PC-9 (cell line): ENCODE measurements at regions of chr5 and their contacts with region 1.

Region 1: DNA sequence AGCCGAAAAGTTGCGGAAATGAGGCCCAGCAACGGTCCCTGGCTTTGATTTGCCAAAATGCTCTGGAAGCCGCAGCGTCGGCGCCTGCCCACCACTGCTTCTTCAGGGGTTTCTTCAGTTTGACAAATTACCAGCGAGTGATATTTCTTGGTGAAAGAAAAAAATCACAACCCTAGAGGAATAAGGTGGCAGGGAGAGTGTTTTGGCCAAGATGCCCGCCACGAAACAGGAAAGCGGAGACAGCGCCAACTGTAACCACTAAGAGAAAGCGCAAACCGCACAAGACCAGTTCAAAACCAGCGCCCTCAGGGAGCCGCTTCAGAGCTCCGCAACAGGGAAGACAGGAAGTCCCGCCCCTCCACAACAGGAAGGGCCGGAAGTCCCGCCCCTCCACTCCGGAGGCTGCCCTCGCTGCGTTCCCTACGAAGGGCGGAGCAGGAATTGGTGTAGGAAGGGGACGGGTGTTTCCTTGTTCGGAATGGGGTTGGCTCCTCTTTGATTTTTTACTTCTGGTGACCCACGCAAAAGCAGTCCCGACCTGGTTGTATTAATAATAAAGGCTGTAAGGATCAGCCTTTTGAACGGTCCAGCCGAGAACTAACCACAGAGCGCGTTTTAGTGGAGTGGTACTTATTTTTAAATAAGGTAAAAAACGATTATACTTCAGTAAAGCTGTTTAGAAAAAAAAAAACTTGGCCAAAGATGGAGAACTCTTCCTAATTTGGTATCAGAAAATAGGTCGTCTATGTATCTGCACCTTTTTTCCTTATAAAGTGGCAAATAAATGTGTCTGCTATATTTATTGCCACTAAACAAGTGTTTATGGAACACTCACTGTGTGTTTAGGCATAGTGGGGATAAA is at the start of gene C5orf34:
- DNase-seq: peak; percentile 99 to 100
- H3K4me3 ChIP-seq: peak within 1 kb of the TSS; percentile 73
- H3K27ac ChIP-seq: peak within 1 kb of the TSS; percentile 72
- H3K4me1 ChIP-seq: peaks cover 22% of the 10 kb centered on the region
- H3K27me3 ChIP-seq: no peaks in the 10 kb centered on the region
- CTCF ChIP-seq: 0 out of 2 replicates have a peak, but pooled peaks have one; percentile 15
- total RNA-seq, gene C5orf34: 16.0 and 22.6 TPM in 2 replicates

Region 2: GRCh38 chr5:43543434-43543833 is 28.4 kb after region 1 on chr5:
- CTCF ChIA-PET with region 1: interaction called, 4 read pairs
- POLR2A ChIA-PET with region 1: interaction called, 19 read pairs
- intact Hi-C with region 1: no loop called
- DNase-seq: no peak
- H3K4me3 ChIP-seq: no peak overlapping the region
- H3K27ac ChIP-seq: no peak overlapping the region
- H3K4me1 ChIP-seq: no peaks in the 10 kb centered on the region
- H3K27me3 ChIP-seq: no peaks in the 10 kb centered on the region
- CTCF ChIP-seq: no peak

Region 3: GRCh38 chr5:43556857-43557542 is 42.0 kb after region 1 on chr5 and contains the start of gene PAIP1:
- CTCF ChIA-PET with region 1: no interaction called
- POLR2A ChIA-PET with region 1: no interaction called
- intact Hi-C with region 1: loop called (anchors 1 kb)
- DNase-seq: peak; percentile 86 to 98
- H3K4me3 ChIP-seq: peak within 1 kb of the TSS; percentile 88
- H3K27ac ChIP-seq: peak within 1 kb of the TSS; percentile 76
- H3K4me1 ChIP-seq: peaks cover 34% of the 10 kb centered on the region
- H3K27me3 ChIP-seq: no peaks in the 10 kb centered on the region
- CTCF ChIP-seq: peak; percentile 71
- total RNA-seq, gene PAIP1: 183 and 191 TPM in 2 replicates